ENCODE measurements at regions of chr3 and their contacts with region 1.

Region 1: DNA sequence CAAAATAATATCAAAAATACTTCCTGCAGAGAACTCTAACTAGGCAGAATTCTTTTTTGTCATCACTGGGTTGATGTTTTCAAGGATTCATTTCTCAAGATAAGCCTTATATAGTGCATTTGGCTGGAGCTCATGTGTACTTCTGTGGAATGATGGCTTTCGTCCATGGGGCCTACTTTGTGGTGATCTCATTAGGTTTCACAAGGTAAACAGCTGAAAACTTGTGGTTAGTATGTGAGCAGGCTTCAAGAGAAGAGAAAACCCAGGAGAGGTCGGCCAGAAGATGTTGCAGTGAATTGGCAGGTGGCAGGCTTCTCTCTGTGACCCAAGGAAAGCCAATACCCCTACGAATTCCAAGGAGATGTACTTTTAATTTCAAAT is 121.4 kb upstream of the PHLDB2 start:
- DNase-seq: peak in 1 of 2 donors; percentile 79
- ATAC-seq: peak; percentile 69 to 85 (median 82)
- H3K4me3 ChIP-seq: no peak overlapping the region
- H3K27ac ChIP-seq: peak overlapping the region; percentile 39 to 93 (median 82)
- H3K4me1 ChIP-seq: peaks cover 0 to 66% (median 55%) of the 10 kb centered on the region in 9 donors
- H3K27me3 ChIP-seq: no peaks in the 10 kb centered on the region
- CTCF ChIP-seq: no peak

Region 2: DNA sequence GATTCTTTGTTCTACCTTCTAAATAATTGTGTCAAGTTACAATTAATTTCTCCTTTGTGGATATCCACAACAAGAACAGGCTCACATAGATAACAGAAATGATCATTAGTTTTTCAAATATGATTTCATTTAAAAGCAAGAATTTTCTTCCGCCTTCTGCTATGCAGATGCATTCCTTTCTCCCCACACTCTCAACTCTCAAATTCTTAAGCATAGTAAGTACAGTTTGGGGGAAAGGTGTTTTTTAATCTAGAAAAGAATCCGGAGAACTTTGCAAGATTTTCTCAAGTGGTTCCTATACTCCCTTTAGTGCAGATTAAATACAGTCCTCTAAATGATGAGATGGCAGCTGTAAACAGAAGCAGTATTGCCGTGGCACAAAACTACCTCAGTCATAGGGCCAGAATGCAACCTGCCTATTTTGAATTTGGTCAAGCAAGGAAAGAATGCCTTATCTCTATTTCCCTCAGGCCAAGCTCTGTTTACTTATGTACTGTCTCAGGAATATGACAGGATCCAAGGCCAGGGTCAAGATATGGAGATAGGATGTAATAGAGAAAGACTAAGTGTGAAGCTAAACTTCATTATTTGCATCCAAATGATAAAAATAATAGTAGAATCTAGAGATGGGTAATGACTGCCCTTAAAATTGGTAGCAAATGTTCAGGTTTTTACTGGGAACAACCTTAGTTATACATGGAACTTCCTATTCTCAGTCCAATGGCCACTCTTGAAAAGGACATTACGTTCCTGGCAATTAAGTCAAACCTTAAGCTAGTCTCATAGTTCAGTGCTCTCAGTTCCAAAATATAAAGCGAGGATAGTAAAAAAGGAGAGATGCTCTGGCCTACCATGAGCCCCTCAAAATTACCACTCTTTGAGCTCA is 44.1 kb after region 1 on chr3:
- intact Hi-C with region 1: loop called in 2 of 10 experiments (anchors 5 kb)
- DNase-seq: no peak
- ATAC-seq: peak in 2 of 8 donors; percentile 50 to 57
- H3K4me3 ChIP-seq: no peak overlapping the region
- H3K27ac ChIP-seq: peak overlapping the region in 9 of 10 donors; percentile 42 to 74 (median 54)
- H3K4me1 ChIP-seq: peaks cover 0 to 52% (median 29%) of the 10 kb centered on the region in 9 donors
- H3K27me3 ChIP-seq: no peaks in the 10 kb centered on the region
- CTCF ChIP-seq: no peak

Region 3: DNA sequence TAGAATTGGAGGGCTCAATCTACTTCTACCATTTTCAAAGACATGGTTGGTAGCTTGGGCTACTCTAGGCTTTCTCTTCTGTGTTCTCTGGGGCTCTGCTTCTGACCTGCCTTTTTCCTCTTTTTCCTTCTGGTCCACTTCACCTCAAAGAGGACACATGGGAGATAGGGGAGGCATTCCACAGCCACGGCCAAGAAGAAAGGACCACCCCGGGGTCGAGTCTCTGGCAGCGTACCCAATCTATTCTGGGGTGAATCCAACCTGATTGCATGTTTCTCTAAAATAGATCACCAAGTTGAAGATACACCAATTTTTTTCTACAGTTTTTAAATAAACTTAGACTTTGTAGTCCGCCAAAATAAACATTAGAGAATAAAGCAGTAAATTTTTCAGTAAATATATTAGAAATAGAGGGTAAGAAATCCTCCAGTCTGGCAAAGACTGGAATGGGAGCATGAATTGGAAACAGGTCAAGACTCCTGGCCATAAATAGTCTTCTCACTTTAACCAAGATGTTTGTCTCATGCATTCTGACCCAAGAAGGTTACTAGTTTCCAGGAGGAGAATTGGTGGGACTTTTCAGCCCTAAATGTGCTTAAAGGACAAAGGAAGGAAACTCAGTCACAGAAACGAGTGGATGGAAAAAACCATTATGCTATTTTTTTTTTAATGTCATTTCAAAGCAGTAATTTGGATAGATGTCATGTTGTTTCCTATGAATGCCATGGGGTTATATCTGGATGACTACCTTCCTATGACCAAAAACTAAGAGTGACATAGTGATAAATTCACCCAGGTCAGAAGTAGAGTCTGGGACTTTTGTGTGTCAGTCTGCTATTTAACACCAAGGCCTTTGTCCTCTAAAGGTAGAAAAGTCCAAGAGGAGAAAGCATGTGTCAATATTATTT is 50.1 kb after region 1 on chr3:
- intact Hi-C with region 1: loop called in 2 of 10 experiments (anchors 5 kb)
- DNase-seq: peak in 1 of 2 donors; percentile 33
- ATAC-seq: peak in 7 of 8 donors; percentile 31 to 79 (median 57)
- H3K4me3 ChIP-seq: no peak overlapping the region
- H3K27ac ChIP-seq: peak overlapping the region in 8 of 10 donors; percentile 5 to 65 (median 28)
- H3K4me1 ChIP-seq: peaks cover 0 to 53% (median 21%) of the 10 kb centered on the region in 9 donors
- H3K27me3 ChIP-seq: no peaks in the 10 kb centered on the region
- CTCF ChIP-seq: no peak

Region 4: DNA sequence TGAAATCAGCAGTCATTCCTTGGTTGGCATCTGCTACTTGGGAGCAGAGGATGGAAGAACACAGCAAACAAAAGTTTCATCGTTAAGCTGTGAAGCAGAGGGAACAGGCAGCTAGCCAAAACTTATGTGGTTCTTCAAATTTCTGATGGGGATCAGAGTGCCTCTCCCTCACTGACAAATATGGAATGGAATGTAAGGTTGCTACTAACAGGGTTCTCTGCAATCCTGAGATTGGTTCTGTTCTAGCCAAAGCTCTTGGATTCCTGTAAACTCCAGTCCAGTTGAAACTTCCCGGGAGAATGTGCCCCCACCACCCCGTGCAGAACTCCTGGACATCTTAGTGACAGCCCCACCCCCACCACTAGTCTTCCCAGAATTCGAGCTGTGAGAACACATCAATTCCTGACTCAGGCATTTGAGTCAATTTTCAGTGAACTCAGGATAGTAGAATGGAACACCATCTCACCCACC is 65.5 kb after region 1 on chr3:
- intact Hi-C with region 1: loop called in 1 of 10 experiments (anchors 5 kb)
- DNase-seq: peak; percentile 39
- ATAC-seq: peak; percentile 63 to 88 (median 74)
- H3K4me3 ChIP-seq: no peak overlapping the region
- H3K27ac ChIP-seq: peak overlapping the region in 8 of 10 donors; percentile 48 to 78 (median 61)
- H3K4me1 ChIP-seq: peaks cover 0 to 34% (median 23%) of the 10 kb centered on the region in 9 donors
- H3K27me3 ChIP-seq: no peaks in the 10 kb centered on the region
- CTCF ChIP-seq: no peak

Region 5: GRCh38 chr3:111910806-111911205 is 173.1 kb after region 1 on chr3:
- intact Hi-C with region 1: loop called in 1 of 10 experiments (anchors 5 kb)
- DNase-seq: no peak
- ATAC-seq: peak; percentile 42 to 91 (median 74)
- H3K4me3 ChIP-seq: no peak overlapping the region
- H3K27ac ChIP-seq: peak overlapping the region in 9 of 10 donors; percentile 32 to 65 (median 48)
- H3K4me1 ChIP-seq: peaks cover 8 to 86% (median 76%) of the 10 kb centered on the region in 9 donors
- H3K27me3 ChIP-seq: no peaks in the 10 kb centered on the region
- CTCF ChIP-seq: no peak